ENCODE measurements at regions of chr19 and their contacts with region 1.

Region 1: DNA sequence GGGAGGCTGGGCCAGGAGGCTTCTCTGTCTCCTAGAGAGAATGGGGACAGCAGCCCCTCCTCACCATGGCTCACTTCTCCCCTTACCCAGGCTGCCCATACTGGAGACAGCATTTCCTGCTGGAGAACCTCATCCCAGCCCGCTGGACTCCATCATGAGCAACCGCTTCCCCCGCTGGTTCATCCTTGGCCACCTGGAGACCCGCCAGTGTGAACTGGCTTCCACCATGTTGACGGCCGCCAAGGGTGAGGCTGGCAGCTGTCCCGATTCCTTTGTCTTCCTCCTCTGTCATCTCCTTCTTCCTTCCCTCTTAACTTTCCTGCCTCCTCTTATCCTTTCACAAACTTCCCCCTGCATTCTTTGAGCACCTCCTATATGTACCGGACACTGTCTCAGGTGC is 28.0 kb downstream of the ZSWIM4 start:
- DNase-seq: peak; percentile 68 to 81
- ATAC-seq: peak in 3 of 4 donors; percentile 19 to 37 (median 32)
- H3K4me3 ChIP-seq: no peak overlapping the region
- H3K27ac ChIP-seq: no peak overlapping the region
- H3K4me1 ChIP-seq: no peaks in the 10 kb centered on the region
- H3K27me3 ChIP-seq: no peaks in the 10 kb centered on the region
- CTCF ChIP-seq: no peak

Region 2: GRCh38 chr19:13621413-13621812 is 201.8 kb before region 1 on chr19:
- intact Hi-C with region 1: no loop called
- DNase-seq: peak in 1 of 2 donors; percentile 14
- ATAC-seq: no peak
- H3K4me3 ChIP-seq: no peak overlapping the region
- H3K27ac ChIP-seq: no peak overlapping the region
- H3K4me1 ChIP-seq: no peaks in the 10 kb centered on the region
- H3K27me3 ChIP-seq: peaks cover 0 to 24% (median 5%) of the 10 kb centered on the region in 3 donors
- CTCF ChIP-seq: no peak

Region 3: GRCh38 chr19:13681509-13681908 is 141.7 kb before region 1 on chr19:
- intact Hi-C with region 1: no loop called
- DNase-seq: no peak
- ATAC-seq: no peak
- H3K4me3 ChIP-seq: no peak overlapping the region
- H3K27ac ChIP-seq: no peak overlapping the region
- H3K4me1 ChIP-seq: no peaks in the 10 kb centered on the region
- H3K27me3 ChIP-seq: no peaks in the 10 kb centered on the region
- CTCF ChIP-seq: no peak

Region 4: DNA sequence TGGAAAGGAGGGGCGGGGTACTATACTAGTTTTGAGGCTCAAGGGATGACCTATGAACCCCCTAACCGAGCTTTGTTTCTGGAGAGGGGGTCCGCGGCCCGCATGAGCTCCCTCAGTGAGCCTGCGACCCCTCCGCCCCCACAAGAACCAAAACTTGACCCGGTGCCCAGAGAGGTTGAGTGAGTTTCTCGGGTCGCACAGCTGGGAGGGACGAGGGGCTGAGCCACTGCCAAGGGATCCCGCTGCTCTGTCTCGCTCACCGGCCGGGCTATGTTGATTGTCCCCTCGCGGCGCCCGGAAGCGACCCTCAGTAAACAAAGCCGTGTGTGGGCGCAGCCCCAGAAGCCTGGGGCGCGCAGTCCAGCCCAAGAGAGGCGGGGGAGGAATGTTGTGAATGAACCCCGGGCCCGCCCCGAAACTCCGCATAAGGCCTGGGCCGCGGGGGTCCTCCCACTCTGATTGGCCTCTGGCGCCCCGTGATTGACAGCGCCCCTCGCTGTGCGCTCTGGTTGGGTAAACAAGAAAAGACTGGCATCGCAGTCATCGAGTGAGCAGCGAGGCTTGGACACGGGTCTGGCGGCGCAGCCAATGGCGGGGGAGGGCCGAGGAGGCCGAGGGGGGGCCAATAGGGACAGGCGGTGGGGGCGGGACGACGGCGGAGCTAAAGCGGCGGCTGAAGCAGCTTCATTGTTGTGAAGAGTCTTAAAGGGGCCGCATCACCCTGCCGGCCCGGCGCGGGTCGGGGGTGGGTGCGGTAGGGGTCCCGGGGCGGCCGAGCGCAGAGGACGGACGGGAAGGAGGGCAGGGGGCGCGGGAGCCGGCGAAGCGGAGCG is 28.3 kb before region 1 on chr19 and contains the start of gene ZSWIM4:
- intact Hi-C with region 1: no loop called
- DNase-seq: peak; percentile 99
- ATAC-seq: peak; percentile 97 to 98 (median 98)
- H3K4me3 ChIP-seq: peak within 1 kb of the TSS; percentile 79
- H3K27ac ChIP-seq: peak within 1 kb of the TSS; percentile 93
- H3K4me1 ChIP-seq: peaks cover 20% of the 10 kb centered on the region
- H3K27me3 ChIP-seq: no peaks in the 10 kb centered on the region
- CTCF ChIP-seq: no peak
- total RNA-seq, gene ZSWIM4: 3.3 to 7.8 (median 4.4) TPM

Region 5: DNA sequence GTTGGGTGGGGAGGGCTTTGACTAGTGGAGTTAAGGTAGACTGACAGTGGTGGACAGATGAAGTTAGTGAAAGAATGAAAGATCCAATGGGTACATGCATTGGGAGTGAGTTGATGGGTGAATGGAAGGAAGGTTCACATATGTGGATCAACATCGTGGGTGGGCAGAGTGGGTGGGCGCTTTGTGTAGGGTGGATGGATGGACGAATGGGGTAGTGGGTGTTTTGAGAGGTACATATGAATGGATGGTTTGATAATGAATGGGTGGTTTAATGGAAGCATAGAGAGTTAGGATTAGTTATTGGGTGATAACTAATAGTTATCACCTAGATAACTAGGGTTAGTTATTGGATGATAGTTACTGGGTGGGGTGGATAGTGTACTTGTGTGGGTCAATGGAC is 16.5 kb before region 1 on chr19:
- intact Hi-C with region 1: loop called in 1 of 2 experiments (anchors 2 kb)
- DNase-seq: no peak
- ATAC-seq: no peak
- H3K4me3 ChIP-seq: no peak overlapping the region
- H3K27ac ChIP-seq: no peak overlapping the region
- H3K4me1 ChIP-seq: no peaks in the 10 kb centered on the region
- H3K27me3 ChIP-seq: no peaks in the 10 kb centered on the region
- CTCF ChIP-seq: no peak

Measured in psoas muscle (tissue), 8 donors.